Calu3 (cell line): ENCODE measurements at regions of chr1 and their contacts with region 1.

Region 1: DNA sequence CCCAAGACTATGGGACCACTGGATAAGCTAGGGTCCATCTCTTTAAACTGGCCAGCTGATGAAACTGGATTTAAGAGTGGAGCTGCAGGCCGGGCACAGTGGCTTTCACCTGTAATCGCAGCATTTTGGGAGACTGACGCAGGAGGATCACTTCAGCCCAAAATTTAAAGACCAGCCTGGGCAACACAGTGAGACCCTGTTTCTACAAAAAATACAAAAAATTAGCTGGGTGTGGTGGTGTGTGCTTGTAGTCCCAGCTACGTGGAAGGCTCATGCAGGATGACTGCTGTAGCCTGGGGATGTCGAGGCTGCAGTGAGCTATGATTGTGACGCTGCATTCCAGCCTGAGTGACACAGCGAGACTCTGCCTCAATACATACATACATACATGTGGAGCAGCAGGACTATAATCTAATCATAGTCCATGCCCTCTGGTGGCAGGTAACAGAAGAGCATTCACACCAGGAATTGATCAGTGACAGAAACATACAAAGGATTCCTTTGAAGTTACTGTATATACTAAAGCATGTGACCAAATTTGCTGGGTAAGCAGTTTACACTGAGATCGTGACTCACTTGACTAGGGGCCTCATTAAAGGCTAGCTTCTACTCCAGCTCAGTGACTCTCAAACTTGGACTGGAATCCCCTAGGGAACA is 101.5 kb upstream of the SLFNL1 start:
- DNase-seq: peak; percentile 73
- H3K4me3 Mint-ChIP-seq: no peak overlapping the region
- H3K27ac Mint-ChIP-seq: no peak overlapping the region
- H3K4me1 Mint-ChIP-seq: peaks cover 9% of the 10 kb centered on the region
- H3K27me3 Mint-ChIP-seq: no peaks in the 10 kb centered on the region
- CTCF ChIP-seq: peak; percentile 58

Region 2: GRCh38 chr1:41038105-41038504 is 84.9 kb before region 1 on chr1:
- CTCF ChIA-PET with region 1: no interaction called
- intact Hi-C with region 1: loop called (anchors 10 kb)
- DNase-seq: no peak
- H3K4me3 Mint-ChIP-seq: no peak overlapping the region
- H3K27ac Mint-ChIP-seq: no peak overlapping the region
- H3K4me1 Mint-ChIP-seq: no peaks in the 10 kb centered on the region
- H3K27me3 Mint-ChIP-seq: no peaks in the 10 kb centered on the region
- CTCF ChIP-seq: no peak

Region 3: GRCh38 chr1:41109316-41110197 is 13.4 kb before region 1 on chr1:
- CTCF ChIA-PET with region 1: interaction called, 11 read pairs
- intact Hi-C with region 1: loop called (anchors 2 kb)
- DNase-seq: peak; percentile 57
- H3K4me3 Mint-ChIP-seq: peak overlapping the region; percentile 56
- H3K27ac Mint-ChIP-seq: peak overlapping the region; percentile 99
- H3K4me1 Mint-ChIP-seq: peaks cover 35% of the 10 kb centered on the region
- H3K27me3 Mint-ChIP-seq: no peaks in the 10 kb centered on the region
- CTCF ChIP-seq: no peak

Region 4: DNA sequence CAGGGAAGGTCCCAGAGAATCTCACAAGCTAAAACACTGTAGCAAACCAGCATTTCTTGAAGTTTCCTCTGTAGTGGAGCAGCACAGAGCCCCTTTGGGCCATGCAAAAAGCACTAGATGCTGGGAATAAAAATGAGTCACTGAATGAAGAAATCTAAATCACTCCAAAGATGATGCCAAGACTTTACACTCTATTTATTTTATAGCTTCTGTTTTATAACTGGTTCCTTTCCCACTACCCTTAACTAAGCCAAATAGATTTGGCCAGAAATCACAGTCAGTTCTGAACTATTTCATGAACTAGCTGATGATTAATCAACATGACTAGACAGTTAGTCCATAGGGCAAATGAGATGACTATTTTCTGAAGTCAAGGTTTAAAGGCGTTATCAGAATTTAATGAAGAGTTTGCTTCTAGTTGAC is 29.7 kb after region 1 on chr1:
- CTCF ChIA-PET with region 1: no interaction called
- intact Hi-C with region 1: no loop called
- DNase-seq: no peak
- H3K4me3 Mint-ChIP-seq: no peak overlapping the region
- H3K27ac Mint-ChIP-seq: no peak overlapping the region
- H3K4me1 Mint-ChIP-seq: peaks cover 12% of the 10 kb centered on the region
- H3K27me3 Mint-ChIP-seq: no peaks in the 10 kb centered on the region
- CTCF ChIP-seq: no peak

Region 5: DNA sequence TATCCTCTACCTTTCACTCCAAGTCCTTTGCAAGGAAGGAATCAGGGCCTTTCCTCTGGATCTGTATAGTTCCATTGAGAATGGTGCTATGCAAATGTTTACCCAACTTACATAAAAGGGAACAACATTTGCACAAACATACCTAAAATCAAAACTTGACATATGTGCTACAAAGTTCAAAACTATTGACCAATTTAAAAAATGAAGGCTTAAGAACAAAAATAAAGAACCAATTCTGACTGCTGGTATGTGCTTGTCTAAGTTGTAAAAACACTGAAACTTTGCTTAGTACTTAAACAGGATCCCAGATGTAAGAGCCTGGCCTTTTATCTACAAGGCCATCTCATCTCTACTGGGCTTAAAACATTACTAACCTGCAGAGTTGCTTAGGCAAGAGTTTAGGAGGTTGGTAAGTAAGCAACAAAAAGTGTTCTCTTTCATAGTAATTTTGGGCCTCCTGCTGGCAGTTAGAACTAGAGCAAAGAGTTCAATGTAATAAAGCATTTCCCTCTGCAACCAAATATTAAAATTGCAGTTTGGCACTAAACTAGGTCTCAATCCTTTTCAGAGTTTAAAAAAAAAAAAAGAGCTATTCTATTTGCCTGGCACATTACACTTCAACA is 117.1 kb after region 1 on chr1:
- CTCF ChIA-PET with region 1: interaction called, 3 read pairs
- intact Hi-C with region 1: loop called (anchors 5 kb)
- DNase-seq: no peak
- H3K4me3 Mint-ChIP-seq: peak overlapping the region; percentile 83
- H3K27ac Mint-ChIP-seq: no peak overlapping the region
- H3K4me1 Mint-ChIP-seq: peaks cover 19% of the 10 kb centered on the region
- H3K27me3 Mint-ChIP-seq: no peaks in the 10 kb centered on the region
- CTCF ChIP-seq: no peak